ENCODE measurements at regions of chr19 and their contacts with region 1.

Region 1: GRCh38 chr19:2950286-2951124 is 5.7 kb upstream of the ZNF77 start:
- DNase-seq: peak; percentile 98
- H3K4me3 ChIP-seq: peak overlapping the region; percentile 71 to 76 (median 75)
- H3K27ac ChIP-seq: peak overlapping the region; percentile 69
- H3K4me1 ChIP-seq: peaks cover 6% of the 10 kb centered on the region
- H3K27me3 ChIP-seq: no peaks in the 10 kb centered on the region
- CTCF ChIP-seq: no peak

Region 2: GRCh38 chr19:2817313-2817712 is 133.2 kb before region 1 on chr19:
- CTCF ChIA-PET with region 1: no interaction called
- dilution Hi-C with region 1: no loop called
- in situ Hi-C with region 1: no loop called
- intact Hi-C with region 1: no loop called
- DNase-seq: peak; percentile 29
- H3K4me3 ChIP-seq: no peak overlapping the region
- H3K27ac ChIP-seq: no peak overlapping the region
- H3K4me1 ChIP-seq: no peaks in the 10 kb centered on the region
- H3K27me3 ChIP-seq: no peaks in the 10 kb centered on the region
- CTCF ChIP-seq: no peak

Region 3: GRCh38 chr19:2827840-2828489 is 122.5 kb before region 1 on chr19:
- CTCF ChIA-PET with region 1: no interaction called
- dilution Hi-C with region 1: no loop called
- in situ Hi-C with region 1: no loop called
- intact Hi-C with region 1: no loop called
- DNase-seq: no peak
- H3K4me3 ChIP-seq: no peak overlapping the region
- H3K27ac ChIP-seq: no peak overlapping the region
- H3K4me1 ChIP-seq: no peaks in the 10 kb centered on the region
- H3K27me3 ChIP-seq: no peaks in the 10 kb centered on the region
- CTCF ChIP-seq: no peak

Region 4: GRCh38 chr19:2887391-2887914 is 63.1 kb before region 1 on chr19:
- CTCF ChIA-PET with region 1: interaction called, 39 read pairs
- dilution Hi-C with region 1: no loop called
- in situ Hi-C with region 1: no loop called
- intact Hi-C with region 1: loop called (anchors 1 kb)
- DNase-seq: peak; percentile 66
- H3K4me3 ChIP-seq: peak overlapping the region in 2 of 3 experiments; percentile 19 to 35
- H3K27ac ChIP-seq: no peak overlapping the region
- H3K4me1 ChIP-seq: no peaks in the 10 kb centered on the region
- H3K27me3 ChIP-seq: no peaks in the 10 kb centered on the region
- CTCF ChIP-seq: peak; percentile 66 to 68

Region 5: GRCh38 chr19:3075895-3076431 is 125.5 kb after region 1 on chr19:
- CTCF ChIA-PET with region 1: interaction called, 14 read pairs
- dilution Hi-C with region 1: no loop called
- in situ Hi-C with region 1: no loop called
- intact Hi-C with region 1: no loop called
- DNase-seq: peak; percentile 38
- H3K4me3 ChIP-seq: peak overlapping the region in 1 of 3 experiments; percentile 16
- H3K27ac ChIP-seq: no peak overlapping the region
- H3K4me1 ChIP-seq: peaks cover 6% of the 10 kb centered on the region
- H3K27me3 ChIP-seq: no peaks in the 10 kb centered on the region
- CTCF ChIP-seq: peak; percentile 69 to 94

Region 6: GRCh38 chr19:3163230-3163886 is 212.9 kb after region 1 on chr19:
- CTCF ChIA-PET with region 1: no interaction called
- dilution Hi-C with region 1: no loop called
- in situ Hi-C with region 1: loop called in 1 of 2 experiments (anchors 10 kb)
- intact Hi-C with region 1: loop called (anchors 1 kb)
- DNase-seq: peak; percentile 25
- H3K4me3 ChIP-seq: no peak overlapping the region
- H3K27ac ChIP-seq: no peak overlapping the region
- H3K4me1 ChIP-seq: peaks cover 15% of the 10 kb centered on the region
- H3K27me3 ChIP-seq: no peaks in the 10 kb centered on the region
- CTCF ChIP-seq: peak; percentile 86 to 97

Region 7: GRCh38 chr19:3479177-3479833 is 528.8 kb after region 1 on chr19:
- CTCF ChIA-PET with region 1: no interaction called
- dilution Hi-C with region 1: no loop called
- in situ Hi-C with region 1: loop called in 1 of 2 experiments (anchors 25 kb)
- intact Hi-C with region 1: loop called (anchors 5 kb)
- DNase-seq: no peak
- H3K4me3 ChIP-seq: no peak overlapping the region
- H3K27ac ChIP-seq: no peak overlapping the region
- H3K4me1 ChIP-seq: peaks cover 5% of the 10 kb centered on the region
- H3K27me3 ChIP-seq: no peaks in the 10 kb centered on the region
- CTCF ChIP-seq: no peak

Region 8: GRCh38 chr19:3880471-3881271 is 930.2 kb after region 1 on chr19 and contains the start of gene ATCAY:
- CTCF ChIA-PET with region 1: no interaction called
- dilution Hi-C with region 1: no loop called
- in situ Hi-C with region 1: no loop called
- intact Hi-C with region 1: no loop called
- DNase-seq: no peak
- H3K4me3 ChIP-seq: no peak within 1 kb of the TSS
- H3K27ac ChIP-seq: no peak within 1 kb of the TSS
- H3K4me1 ChIP-seq: no peaks in the 10 kb centered on the region
- H3K27me3 ChIP-seq: peaks cover 23% of the 10 kb centered on the region
- CTCF ChIP-seq: no peak
- total RNA-seq, gene ATCAY: not detected

Measured in mammary epithelial cell (primary cell).